Left cardiac atrium (tissue), 4 donors: ENCODE measurements at regions of chr6 and their contacts with region 1.

Region 1: DNA sequence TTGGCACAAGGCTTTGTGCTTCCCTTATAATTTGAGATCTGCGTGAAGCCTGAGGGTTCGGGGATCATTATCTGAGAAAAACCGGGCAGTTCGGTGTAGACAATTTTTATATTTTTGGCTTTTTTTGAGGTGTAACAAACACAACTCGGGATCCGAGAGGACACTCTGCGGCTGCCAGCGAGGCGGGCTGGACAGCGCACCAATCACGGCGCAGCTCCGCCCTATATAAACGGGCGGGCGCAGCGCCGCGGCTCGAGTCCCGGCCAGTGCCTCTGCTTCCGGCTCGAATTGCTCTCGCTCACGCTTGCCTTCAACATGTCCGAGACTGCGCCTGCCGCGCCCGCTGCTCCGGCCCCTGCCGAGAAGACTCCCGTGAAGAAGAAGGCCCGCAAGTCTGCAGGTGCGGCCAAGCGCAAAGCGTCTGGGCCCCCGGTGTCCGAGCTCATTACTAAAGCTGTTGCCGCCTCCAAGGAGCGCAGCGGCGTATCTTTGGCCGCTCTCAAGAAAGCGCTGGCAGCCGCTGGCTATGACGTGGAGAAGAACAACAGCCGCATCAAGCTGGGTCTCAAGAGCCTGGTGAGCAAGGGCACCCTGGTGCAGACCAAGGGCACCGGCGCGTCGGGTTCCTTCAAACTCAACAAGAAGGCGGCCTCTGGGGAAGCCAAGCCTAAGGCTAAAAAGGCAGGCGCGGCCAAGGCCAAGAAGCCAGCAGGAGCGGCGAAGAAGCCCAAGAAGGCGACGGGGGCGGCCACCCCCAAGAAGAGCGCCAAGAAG is 69.0 kb downstream of the HFE start:
- DNase-seq: peak; percentile 93
- ATAC-seq: peak; percentile 85 to 86

Region 2: DNA sequence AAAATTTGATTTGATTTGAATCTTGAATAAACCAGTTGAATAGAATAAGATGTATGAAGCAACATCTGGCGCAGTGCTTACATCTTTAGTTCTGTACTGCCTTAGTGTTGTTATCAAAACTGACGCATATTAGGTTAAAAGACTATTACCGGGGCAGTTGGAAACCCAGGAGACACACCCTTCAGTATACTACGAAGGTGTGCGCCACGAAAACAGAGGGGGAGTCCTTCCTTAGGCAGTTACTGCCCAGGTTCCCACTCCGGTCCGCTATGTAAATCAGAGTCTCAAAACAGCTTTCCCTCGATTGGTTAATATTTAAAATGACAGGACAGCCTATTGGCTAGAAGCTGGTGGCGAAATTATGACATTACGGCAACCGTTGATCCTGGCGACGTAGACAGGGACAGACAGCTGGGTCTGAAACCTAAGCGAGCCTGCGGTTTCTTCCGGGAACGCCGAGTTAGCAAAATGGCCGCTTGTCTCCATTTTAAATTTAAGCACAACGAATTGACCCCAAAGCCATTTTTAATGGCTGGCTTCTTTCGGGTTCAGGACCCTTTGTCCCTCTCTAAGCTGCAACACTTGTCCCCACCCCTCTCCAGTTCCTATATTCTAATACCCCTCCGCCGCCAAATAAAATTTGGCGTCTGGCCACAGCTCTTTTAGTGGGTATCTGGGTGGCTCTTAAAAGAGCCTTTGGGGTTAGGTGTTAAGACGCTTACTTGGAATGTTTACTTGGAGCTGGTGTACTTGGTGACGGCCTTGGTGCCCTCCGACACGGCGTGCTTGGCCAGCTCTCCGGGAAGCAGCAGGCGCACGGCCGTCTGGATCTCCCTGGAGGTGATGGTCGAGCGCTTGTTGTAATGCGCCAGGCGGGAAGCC is 33.2 kb before region 1 on chr6:
- intact Hi-C with region 1: loop called in 1 of 2 experiments (anchors 1 kb)
- DNase-seq: peak; percentile 97
- ATAC-seq: peak; percentile 87 to 88

Region 3: DNA sequence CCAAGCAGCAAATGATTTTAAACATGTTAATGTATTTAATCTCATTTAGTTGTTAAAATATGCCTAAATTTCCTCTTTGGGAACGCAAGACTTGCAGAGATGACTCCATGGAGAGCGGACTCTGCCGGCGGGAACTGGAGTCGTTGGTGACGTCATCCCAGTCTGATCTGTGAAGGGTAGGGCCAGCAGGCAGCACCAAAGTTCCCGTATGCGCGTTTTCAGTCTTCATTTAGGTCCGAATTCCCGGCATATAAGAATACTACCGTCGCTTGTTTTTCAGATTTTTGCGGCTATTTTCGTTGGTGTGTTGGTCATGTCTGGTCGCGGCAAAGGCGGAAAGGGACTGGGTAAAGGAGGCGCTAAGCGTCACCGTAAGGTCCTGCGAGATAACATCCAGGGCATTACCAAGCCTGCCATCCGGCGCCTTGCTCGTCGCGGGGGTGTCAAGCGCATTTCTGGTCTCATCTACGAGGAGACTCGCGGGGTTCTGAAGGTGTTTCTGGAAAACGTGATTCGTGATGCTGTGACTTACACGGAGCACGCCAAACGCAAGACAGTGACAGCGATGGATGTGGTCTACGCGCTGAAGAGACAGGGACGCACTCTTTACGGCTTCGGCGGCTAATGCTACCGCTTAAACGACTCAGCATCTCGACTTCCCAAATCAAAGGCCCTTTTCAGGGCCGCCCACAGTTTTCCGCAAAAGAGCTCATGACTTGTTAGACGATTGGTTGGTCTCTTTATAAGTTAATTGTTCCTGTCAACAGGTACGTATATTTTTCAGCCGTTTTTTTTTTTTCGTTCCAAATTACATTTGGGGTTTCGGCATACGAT is 48.3 kb after region 1 on chr6:
- intact Hi-C with region 1: loop called in 1 of 2 experiments (anchors 5 kb)
- DNase-seq: peak; percentile 92
- ATAC-seq: peak; percentile 91 to 92